ENCODE measurements at regions of chr12 and their contacts with region 1.

Region 1: GRCh38 chr12:94074980-94075928 is 73.1 kb upstream of the PLXNC1 start:
- DNase-seq: peak; percentile 76
- H3K4me3 ChIP-seq: no peak overlapping the region
- H3K27ac ChIP-seq: no peak overlapping the region
- H3K27me3 ChIP-seq: no peaks in the 10 kb centered on the region
- CTCF ChIP-seq: peak; percentile 84

Region 2: DNA sequence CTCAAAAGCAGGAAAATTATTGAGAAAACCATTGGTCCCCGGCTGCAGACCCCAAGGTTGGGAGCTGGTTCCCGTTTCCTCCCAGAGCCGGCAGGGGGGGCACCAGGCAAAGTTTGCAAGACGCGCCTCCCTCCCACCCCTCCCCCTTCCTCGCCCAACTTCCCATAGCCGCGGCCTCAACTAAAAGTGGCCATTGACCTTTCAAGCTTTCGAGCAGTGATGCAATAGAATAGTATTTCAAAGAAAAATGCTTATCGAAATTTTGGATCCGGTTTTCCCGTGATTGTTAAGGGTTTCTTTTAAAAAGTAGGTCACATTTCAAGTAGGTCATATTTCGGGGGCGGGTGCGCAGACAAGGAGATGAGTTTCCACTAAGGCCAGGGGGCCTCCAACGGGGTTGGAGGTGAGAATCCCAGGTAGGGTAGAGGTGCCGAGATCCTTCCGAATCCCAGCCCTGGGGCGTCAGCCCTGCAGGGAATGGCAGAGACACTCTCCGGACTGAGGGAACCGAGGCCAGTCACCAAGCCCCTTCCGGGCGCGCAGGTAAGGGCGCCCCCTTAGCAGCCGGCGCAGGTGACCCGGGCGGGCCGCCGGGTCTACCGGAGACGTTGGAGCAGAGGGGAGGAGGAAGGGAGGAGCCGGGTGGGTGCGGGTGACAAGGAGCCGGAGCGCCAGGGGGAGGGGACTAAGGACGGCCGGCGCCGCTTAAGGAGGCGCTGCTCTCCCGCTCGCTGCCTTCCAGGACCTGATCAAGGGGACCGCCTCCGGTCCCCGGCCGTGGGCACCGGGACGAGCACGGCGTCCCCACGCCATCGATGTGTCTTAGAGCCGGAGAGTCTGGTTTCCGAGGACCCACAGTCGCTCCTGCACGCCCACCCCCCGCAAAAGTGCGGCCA is 505.4 kb before region 1 on chr12:
- in situ Hi-C with region 1: loop called (anchors 25 kb)
- DNase-seq: peak; percentile 79
- H3K4me3 ChIP-seq: peak overlapping the region; percentile 72
- H3K27ac ChIP-seq: peak overlapping the region; percentile 43
- H3K27me3 ChIP-seq: no peaks in the 10 kb centered on the region
- CTCF ChIP-seq: peak; percentile 92

Region 3: DNA sequence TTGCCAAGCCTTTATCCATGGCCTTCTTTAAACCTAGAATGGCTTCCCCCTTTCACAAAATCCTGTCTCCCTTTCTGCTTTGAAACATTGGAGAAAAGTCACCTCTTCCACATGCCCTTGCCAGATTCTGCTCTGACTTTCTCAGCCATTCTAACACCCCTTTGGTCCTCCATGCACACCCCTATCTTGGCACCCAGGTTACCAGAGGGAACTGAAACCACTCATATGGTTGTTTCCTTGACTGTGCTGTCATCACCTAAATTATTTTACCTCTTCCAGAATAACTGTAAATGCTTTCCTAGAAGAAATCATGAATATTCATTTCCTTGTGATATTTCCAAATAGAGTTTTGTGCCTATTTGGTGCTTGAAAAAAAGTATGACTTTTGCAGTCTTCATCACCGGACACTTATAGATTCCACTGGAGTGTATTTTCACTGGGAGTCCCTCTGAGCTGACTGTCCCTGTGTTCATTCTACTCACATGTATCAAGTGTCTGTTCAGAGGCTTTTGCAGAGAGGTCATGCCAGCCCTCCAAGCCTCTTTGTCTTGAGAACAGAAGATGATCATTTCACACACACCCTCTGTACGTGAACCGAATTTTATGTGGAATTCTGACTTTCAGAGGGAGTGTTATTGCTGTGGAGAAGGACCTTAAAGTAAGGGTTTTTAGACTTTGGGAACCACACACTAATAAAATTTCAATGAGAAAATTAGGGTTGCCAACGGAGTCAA is 147.3 kb after region 1 on chr12:
- in situ Hi-C with region 1: no loop called
- DNase-seq: no peak
- H3K4me3 ChIP-seq: no peak overlapping the region
- H3K27ac ChIP-seq: no peak overlapping the region
- H3K27me3 ChIP-seq: peaks cover 3% of the 10 kb centered on the region
- CTCF ChIP-seq: no peak